GM12878 (cell line): ENCODE measurements at regions of chr6 and their contacts with region 1.

Region 1: DNA sequence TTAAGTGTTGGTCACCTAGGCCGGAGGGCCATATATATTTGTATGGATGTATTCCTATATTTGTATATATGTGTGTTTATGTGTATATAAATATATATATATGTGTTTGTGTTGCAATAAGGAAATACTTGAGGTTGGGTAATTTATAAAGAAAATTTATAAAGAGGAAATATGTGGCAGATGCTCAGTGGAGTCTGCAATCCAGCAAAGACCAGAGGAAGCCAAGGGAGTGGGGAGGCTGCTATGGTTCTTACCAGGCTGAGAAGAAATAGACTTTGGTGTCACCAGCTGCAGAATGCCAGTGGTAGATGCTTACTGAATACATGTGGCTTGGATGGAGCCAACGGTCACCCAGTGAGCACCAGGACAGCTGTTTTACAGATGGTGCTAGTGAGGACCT is 97.4 kb upstream of the ELOVL5 start:
- DNase-seq: no peak
- ATAC-seq: no peak
- H3K4me3 ChIP-seq: no peak overlapping the region
- H3K27ac ChIP-seq: no peak overlapping the region
- H3K4me1 ChIP-seq: no peaks in the 10 kb centered on the region
- H3K27me3 ChIP-seq: peaks cover 0 to 8% of the 10 kb centered on the region in 2 experiments; a peak in 1 of 4 replicates
- CTCF ChIP-seq: no peak
- EP300 ChIP-seq: no peak
- POLR2A ChIP-seq: no peak
- RAD21 ChIP-seq: no peak

Region 2: DNA sequence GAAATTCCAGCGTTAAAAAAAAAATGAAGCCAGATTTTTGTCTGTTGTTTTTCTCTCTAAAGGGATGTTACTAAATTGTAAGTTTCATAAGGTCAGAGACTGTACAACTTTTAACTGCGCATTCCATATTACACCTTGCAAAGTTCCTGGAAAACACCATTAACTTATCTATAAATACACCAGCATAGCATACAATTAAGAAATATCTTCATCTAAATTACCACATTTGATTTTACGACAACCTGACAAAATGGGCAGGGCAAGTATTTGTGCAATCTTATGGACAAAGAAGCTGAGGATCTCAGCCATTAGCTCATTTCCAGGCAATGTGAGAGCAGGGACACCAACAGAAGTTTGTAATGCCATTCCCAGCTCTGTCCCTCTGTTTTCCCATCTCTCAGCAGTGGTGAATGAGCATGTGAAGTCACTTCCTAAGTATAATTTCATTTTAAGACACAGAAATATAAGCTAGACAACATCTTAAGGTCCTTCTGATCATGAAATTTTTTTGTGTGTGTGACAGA is 284.6 kb before region 1 on chr6:
- CTCF ChIA-PET with region 1: no interaction called
- POLR2A ChIA-PET with region 1: no interaction called
- RAD21 ChIA-PET with region 1: no interaction called
- SMC1A ChIA-PET with region 1: no interaction called
- in situ Hi-C with region 1: no loop called
- intact Hi-C with region 1: no loop called
- DNase-seq: no peak
- ATAC-seq: no peak
- H3K4me3 ChIP-seq: no peak overlapping the region
- H3K27ac ChIP-seq: no peak overlapping the region
- H3K4me1 ChIP-seq: no peaks in the 10 kb centered on the region
- H3K27me3 ChIP-seq: no peaks in the 10 kb centered on the region
- CTCF ChIP-seq: no peak
- EP300 ChIP-seq: no peak
- POLR2A ChIP-seq: no peak
- RAD21 ChIP-seq: no peak

Region 3: GRCh38 chr6:53377793-53378192 is 68.4 kb before region 1 on chr6:
- CTCF ChIA-PET with region 1: no interaction called
- POLR2A ChIA-PET with region 1: no interaction called
- RAD21 ChIA-PET with region 1: no interaction called
- SMC1A ChIA-PET with region 1: no interaction called
- in situ Hi-C with region 1: no loop called
- intact Hi-C with region 1: no loop called
- DNase-seq: no peak
- ATAC-seq: no peak
- H3K4me3 ChIP-seq: no peak overlapping the region
- H3K27ac ChIP-seq: no peak overlapping the region
- H3K4me1 ChIP-seq: no peaks in the 10 kb centered on the region
- H3K27me3 ChIP-seq: no peaks in the 10 kb centered on the region
- CTCF ChIP-seq: no peak
- EP300 ChIP-seq: no peak
- POLR2A ChIP-seq: no peak
- RAD21 ChIP-seq: no peak

Region 4: DNA sequence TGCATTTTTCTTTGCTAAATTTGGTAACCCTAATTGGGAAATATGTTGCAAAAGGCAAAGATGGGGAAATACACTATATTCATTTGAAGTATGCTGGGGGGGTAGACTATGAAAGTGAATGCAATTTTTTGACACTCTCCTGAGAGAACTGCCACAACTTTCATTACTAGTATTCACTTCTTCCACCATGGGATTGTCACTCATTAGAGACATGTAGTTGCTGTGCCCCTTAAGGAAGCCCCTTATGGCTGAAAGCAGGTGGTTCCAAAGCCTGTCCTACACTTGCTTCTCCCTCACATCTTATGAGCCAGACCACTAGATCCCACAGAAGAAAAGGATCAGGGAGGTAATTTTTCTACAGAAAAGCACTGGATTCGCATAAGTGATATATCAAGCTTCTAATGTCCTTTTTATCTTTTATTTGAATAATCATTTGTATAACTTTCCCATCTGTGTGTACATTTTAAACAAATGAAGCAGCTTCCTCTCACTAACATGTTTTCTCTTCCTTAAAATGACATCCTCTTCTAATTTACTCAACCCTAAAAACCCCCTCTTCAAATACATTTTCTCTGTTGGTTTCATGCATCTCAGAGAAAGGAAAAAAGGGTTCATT is 15.0 kb after region 1 on chr6:
- CTCF ChIA-PET with region 1: interaction called, 33 read pairs
- POLR2A ChIA-PET with region 1: interaction called, 17 read pairs
- RAD21 ChIA-PET with region 1: interaction called, 53 read pairs
- SMC1A ChIA-PET with region 1: interaction called, 229 read pairs
- in situ Hi-C with region 1: no loop called
- intact Hi-C with region 1: loop called (anchors 1 kb)
- DNase-seq: peak; percentile 65
- ATAC-seq: peak; percentile 81
- H3K4me3 ChIP-seq: 0 out of 2 replicates have a peak overlapping the region, but pooled peaks have one; percentile 30
- H3K27ac ChIP-seq: peak overlapping the region; percentile 41; the same call in 1 of the 2 replicates
- H3K4me1 ChIP-seq: no peaks in the 10 kb centered on the region
- H3K27me3 ChIP-seq: no peaks in the 10 kb centered on the region
- CTCF ChIP-seq: no peak
- EP300 ChIP-seq: peak; percentile 40 to 60; a peak in 2 of 4 replicates
- POLR2A ChIP-seq: no peak
- RAD21 ChIP-seq: no peak